ENCODE measurements at regions of chr13 and their contacts with region 1.

Region 1: DNA sequence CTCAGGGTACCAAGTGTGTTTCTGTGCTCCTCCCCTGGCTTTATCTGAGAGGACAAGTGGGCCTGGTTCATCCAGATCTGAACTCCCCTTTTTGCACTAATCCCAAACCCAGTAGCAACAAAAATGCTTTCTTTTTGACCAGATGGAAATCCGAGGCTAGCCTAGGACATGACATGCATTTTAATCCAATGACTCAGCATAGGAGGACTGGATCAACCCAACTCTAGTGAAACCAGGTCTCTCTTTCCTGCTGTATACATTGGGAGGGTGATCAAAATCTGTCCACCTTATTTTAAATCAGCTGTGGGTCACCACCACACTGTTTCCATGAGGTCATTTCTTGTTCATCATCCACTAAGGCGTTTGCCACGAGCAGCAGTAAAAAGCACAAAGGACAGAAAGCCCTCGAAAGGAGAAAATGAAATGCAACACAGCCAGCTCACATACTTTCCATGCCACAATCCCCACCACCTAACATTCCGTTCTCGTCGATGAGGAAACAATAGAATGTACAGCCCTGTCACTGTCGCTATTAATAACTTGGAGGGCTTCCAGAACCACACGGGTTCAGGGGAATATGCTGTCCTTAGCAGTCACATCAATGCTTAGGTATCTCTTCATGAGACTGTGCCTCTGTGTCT is 543.0 kb downstream of the IRS2 start:
- DNase-seq: peak in 1 of 2 donors; percentile 40
- ATAC-seq: peak; percentile 57 to 98 (median 92)
- H3K4me3 ChIP-seq: no peak overlapping the region
- H3K27ac ChIP-seq: peak overlapping the region; percentile 59 to 90 (median 78)
- H3K4me1 ChIP-seq: peaks cover 0 to 18% (median 10%) of the 10 kb centered on the region in 9 donors
- H3K27me3 ChIP-seq: no peaks in the 10 kb centered on the region
- CTCF ChIP-seq: no peak

Region 2: GRCh38 chr13:109191413-109191812 is 52.0 kb before region 1 on chr13:
- intact Hi-C with region 1: loop called in 1 of 10 experiments (anchors 2 kb)
- DNase-seq: peak; percentile 16 to 42
- ATAC-seq: peak in 6 of 8 donors; percentile 71 to 99 (median 98)
- H3K4me3 ChIP-seq: no peak overlapping the region
- H3K27ac ChIP-seq: peak overlapping the region in 7 of 10 donors; percentile 11 to 71 (median 58)
- H3K4me1 ChIP-seq: peaks cover 0 to 8% (median 0%) of the 10 kb centered on the region in 9 donors
- H3K27me3 ChIP-seq: no peaks in the 10 kb centered on the region
- CTCF ChIP-seq: no peak

Region 3: GRCh38 chr13:110138010-110138699 is 894.7 kb after region 1 on chr13:
- intact Hi-C with region 1: loop called in 1 of 10 experiments (anchors 10 kb)
- DNase-seq: peak; percentile 56 to 60
- ATAC-seq: peak; percentile 34 to 75 (median 62)
- H3K4me3 ChIP-seq: peak overlapping the region; percentile 51 to 69 (median 62)
- H3K27ac ChIP-seq: peak overlapping the region; percentile 74 to 93 (median 86)
- H3K4me1 ChIP-seq: peaks cover 2 to 44% (median 17%) of the 10 kb centered on the region in 9 donors
- H3K27me3 ChIP-seq: no peaks in the 10 kb centered on the region
- CTCF ChIP-seq: peak in 3 of 9 donors; percentile 5 to 34 (median 28)